Mammary epithelial cell (primary cell): ENCODE measurements at regions of chr1 and their contacts with region 1.

Region 1: GRCh38 chr1:101653482-101653946 is 343.2 kb downstream of the OLFM3 start:
- DNase-seq: peak; percentile 54
- H3K4me3 ChIP-seq: no peak overlapping the region
- H3K27ac ChIP-seq: no peak overlapping the region
- H3K4me1 ChIP-seq: peaks cover 4% of the 10 kb centered on the region
- H3K27me3 ChIP-seq: no peaks in the 10 kb centered on the region
- CTCF ChIP-seq: peak; percentile 68 to 72

Region 2: GRCh38 chr1:101618900-101619299 is 34.6 kb before region 1 on chr1:
- CTCF ChIA-PET with region 1: no interaction called
- dilution Hi-C with region 1: no loop called
- in situ Hi-C with region 1: no loop called
- intact Hi-C with region 1: no loop called
- DNase-seq: no peak
- H3K4me3 ChIP-seq: no peak overlapping the region
- H3K27ac ChIP-seq: no peak overlapping the region
- H3K4me1 ChIP-seq: no peaks in the 10 kb centered on the region
- H3K27me3 ChIP-seq: no peaks in the 10 kb centered on the region
- CTCF ChIP-seq: no peak

Region 3: DNA sequence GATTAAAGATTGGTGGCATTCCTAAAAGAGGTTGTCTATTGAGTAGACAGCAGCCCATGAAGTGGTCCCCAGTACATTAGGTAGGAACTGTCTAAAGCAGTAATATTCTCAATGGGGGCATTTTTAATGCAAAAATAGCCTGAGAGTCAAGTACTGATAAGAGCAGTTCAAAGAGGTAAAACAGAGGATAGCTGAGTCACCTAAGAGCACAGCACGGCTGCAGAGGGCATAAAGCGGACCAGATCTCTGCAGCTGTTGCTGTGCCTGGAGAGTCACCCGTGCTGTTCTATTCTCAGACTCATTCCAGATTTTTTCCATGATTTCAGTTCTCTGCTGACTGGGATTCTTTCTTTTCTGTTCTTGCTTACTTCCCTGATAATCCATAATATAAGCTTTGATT is 30.0 kb after region 1 on chr1:
- CTCF ChIA-PET with region 1: no interaction called
- dilution Hi-C with region 1: no loop called
- in situ Hi-C with region 1: no loop called
- intact Hi-C with region 1: no loop called
- DNase-seq: no peak
- H3K4me3 ChIP-seq: no peak overlapping the region
- H3K27ac ChIP-seq: no peak overlapping the region
- H3K4me1 ChIP-seq: no peaks in the 10 kb centered on the region
- H3K27me3 ChIP-seq: no peaks in the 10 kb centered on the region
- CTCF ChIP-seq: no peak

Region 4: GRCh38 chr1:101820071-101820470 is 166.6 kb after region 1 on chr1:
- CTCF ChIA-PET with region 1: no interaction called
- dilution Hi-C with region 1: no loop called
- in situ Hi-C with region 1: no loop called
- intact Hi-C with region 1: loop called (anchors 2 kb)
- DNase-seq: peak; percentile 30
- H3K4me3 ChIP-seq: no peak overlapping the region
- H3K27ac ChIP-seq: no peak overlapping the region
- H3K4me1 ChIP-seq: no peaks in the 10 kb centered on the region
- H3K27me3 ChIP-seq: peaks cover 6% of the 10 kb centered on the region
- CTCF ChIP-seq: peak; percentile 29 to 67

Region 5: GRCh38 chr1:101971304-101971703 is 317.8 kb after region 1 on chr1:
- CTCF ChIA-PET with region 1: no interaction called
- dilution Hi-C with region 1: no loop called
- in situ Hi-C with region 1: loop called in 1 of 2 experiments (anchors 25 kb)
- intact Hi-C with region 1: loop called (anchors 5 kb)
- DNase-seq: peak; percentile 13
- H3K4me3 ChIP-seq: no peak overlapping the region
- H3K27ac ChIP-seq: no peak overlapping the region
- H3K4me1 ChIP-seq: no peaks in the 10 kb centered on the region
- H3K27me3 ChIP-seq: no peaks in the 10 kb centered on the region
- CTCF ChIP-seq: peak; percentile 31 to 58

Region 6: GRCh38 chr1:101996825-101997465 is 343.4 kb after region 1 on chr1 and contains the start of gene OLFM3:
- CTCF ChIA-PET with region 1: no interaction called
- dilution Hi-C with region 1: no loop called
- in situ Hi-C with region 1: no loop called
- intact Hi-C with region 1: loop called (anchors 5 kb)
- DNase-seq: peak; percentile 20
- H3K4me3 ChIP-seq: no peak within 1 kb of the TSS
- H3K27ac ChIP-seq: no peak within 1 kb of the TSS
- H3K4me1 ChIP-seq: no peaks in the 10 kb centered on the region
- H3K27me3 ChIP-seq: peaks cover 14% of the 10 kb centered on the region
- CTCF ChIP-seq: no peak
- total RNA-seq, gene OLFM3: not detected

Region 7: DNA sequence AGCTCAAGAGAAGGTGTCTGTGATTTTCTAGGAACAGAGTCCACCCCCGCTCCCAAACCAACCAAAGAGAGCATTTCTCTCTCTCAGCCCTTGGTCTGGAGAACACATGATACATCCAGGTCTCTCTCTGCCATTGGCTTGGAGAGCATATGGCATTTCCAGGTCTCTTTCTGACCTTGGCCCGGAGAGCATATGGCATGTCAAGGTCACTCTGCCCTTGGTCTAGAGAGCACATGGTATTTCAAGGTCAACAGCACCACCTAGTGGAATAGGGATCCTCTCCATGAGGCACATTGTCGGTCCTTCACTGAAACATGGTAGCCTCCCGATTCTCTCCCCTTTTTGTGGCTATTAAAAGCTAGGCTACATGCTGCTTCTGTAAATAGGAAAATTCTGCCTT is 780.9 kb after region 1 on chr1:
- CTCF ChIA-PET with region 1: no interaction called
- dilution Hi-C with region 1: no loop called
- in situ Hi-C with region 1: no loop called
- intact Hi-C with region 1: loop called (anchors 10 kb)
- DNase-seq: peak; percentile 4
- H3K4me3 ChIP-seq: no peak overlapping the region
- H3K27ac ChIP-seq: no peak overlapping the region
- H3K4me1 ChIP-seq: no peaks in the 10 kb centered on the region
- H3K27me3 ChIP-seq: no peaks in the 10 kb centered on the region
- CTCF ChIP-seq: peak; percentile 40 to 50